ENCODE measurements at regions of chr9 and their contacts with region 1.

Region 1: DNA sequence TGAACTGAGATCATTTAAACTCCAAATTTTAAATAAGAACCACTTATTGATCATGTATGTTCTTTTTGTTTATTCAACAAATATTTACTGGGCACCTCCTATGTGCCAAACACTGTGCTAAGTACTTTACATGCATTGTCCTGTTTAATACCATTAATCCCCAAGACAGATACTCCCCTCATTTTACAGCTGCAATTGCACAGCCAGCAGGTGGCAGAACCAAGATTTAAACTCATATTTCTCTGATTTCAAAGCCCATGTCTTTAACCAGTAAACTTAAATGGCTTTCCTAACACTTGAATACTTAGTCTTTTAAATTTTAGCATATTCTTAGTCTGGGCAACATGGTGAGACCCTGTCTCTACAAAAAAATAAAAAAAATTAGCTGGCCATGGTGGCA is 43.4 kb upstream of the KIAA1958 start:
- DNase-seq: peak in 4 of 5 donors; percentile 14 to 28 (median 24)
- H3K4me3 ChIP-seq: no peak overlapping the region
- H3K4me3 Mint-ChIP-seq: no peak overlapping the region
- H3K27ac ChIP-seq: no peak overlapping the region
- H3K27ac Mint-ChIP-seq: no peak overlapping the region
- H3K4me1 ChIP-seq: no peaks in the 10 kb centered on the region
- H3K4me1 Mint-ChIP-seq: peaks cover 0 to 2% (median 0%) of the 10 kb centered on the region in 4 donors
- H3K27me3 ChIP-seq: no peaks in the 10 kb centered on the region
- H3K27me3 Mint-ChIP-seq: no peaks in the 10 kb centered on the region

Region 2: DNA sequence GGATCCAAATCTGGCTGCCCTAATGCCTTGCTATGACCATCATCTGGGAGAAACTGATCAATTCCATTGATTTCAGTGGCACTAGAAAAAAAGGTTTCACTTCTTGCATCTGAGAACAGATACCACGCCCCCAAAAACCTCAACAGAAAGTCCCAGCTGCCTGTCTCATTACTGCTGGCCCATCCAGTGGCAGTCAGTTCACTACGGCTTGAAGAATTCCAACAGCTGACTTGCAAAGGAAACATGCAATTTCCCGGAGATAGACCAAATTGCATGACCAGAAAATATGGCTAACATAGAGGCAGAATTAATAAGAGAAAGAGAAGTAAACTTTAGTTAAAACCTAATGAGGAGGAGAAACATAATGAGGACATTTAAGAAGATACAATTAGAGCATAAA is 498.0 kb before region 1 on chr9:
- CTCF ChIA-PET with region 1: no interaction called
- POLR2A ChIA-PET with region 1: no interaction called
- intact Hi-C with region 1: no loop called
- DNase-seq: peak in 1 of 5 donors; percentile 37
- H3K4me3 ChIP-seq: no peak overlapping the region
- H3K4me3 Mint-ChIP-seq: peak overlapping the region in 3 of 8 donors; percentile 5 to 60 (median 26)
- H3K27ac ChIP-seq: no peak overlapping the region
- H3K27ac Mint-ChIP-seq: no peak overlapping the region
- H3K4me1 ChIP-seq: peaks cover 7% of the 10 kb centered on the region
- H3K4me1 Mint-ChIP-seq: peaks cover 5 to 21% (median 8%) of the 10 kb centered on the region in 4 donors
- H3K27me3 ChIP-seq: no peaks in the 10 kb centered on the region
- H3K27me3 Mint-ChIP-seq: no peaks in the 10 kb centered on the region

Region 3: DNA sequence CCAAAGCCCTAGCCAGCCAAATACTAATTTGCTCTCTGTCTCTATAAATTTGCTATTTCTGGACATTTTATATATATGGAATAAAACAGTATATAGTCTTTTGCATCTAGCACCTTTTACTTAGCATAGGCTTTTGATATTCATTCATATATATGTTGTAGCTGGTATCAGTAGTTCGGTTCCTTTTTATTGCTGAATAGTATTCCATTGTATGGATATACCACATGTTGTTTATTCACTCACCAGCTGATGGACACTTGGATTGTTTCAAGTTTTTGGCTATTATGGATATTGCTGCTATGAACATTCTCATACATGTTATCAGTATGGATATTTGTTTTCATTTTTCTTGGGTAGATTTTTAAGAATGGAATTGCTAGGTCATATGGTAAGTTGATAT is 19.7 kb after region 1 on chr9:
- CTCF ChIA-PET with region 1: interaction called, 11 read pairs
- POLR2A ChIA-PET with region 1: no interaction called
- intact Hi-C with region 1: no loop called
- DNase-seq: no peak
- H3K4me3 ChIP-seq: no peak overlapping the region
- H3K4me3 Mint-ChIP-seq: no peak overlapping the region
- H3K27ac ChIP-seq: no peak overlapping the region
- H3K27ac Mint-ChIP-seq: no peak overlapping the region
- H3K4me1 ChIP-seq: no peaks in the 10 kb centered on the region
- H3K4me1 Mint-ChIP-seq: no peaks in the 10 kb centered on the region
- H3K27me3 ChIP-seq: no peaks in the 10 kb centered on the region
- H3K27me3 Mint-ChIP-seq: no peaks in the 10 kb centered on the region

Region 4: GRCh38 chr9:112486221-112487007 is 43.2 kb after region 1 on chr9 and contains the start of gene KIAA1958:
- CTCF ChIA-PET with region 1: interaction called, 6 read pairs
- POLR2A ChIA-PET with region 1: interaction called, 3 read pairs
- intact Hi-C with region 1: loop called (anchors 2 kb)
- DNase-seq: peak; percentile 65 to 76 (median 72)
- H3K4me3 ChIP-seq: peak within 1 kb of the TSS; percentile 77 to 78
- H3K4me3 Mint-ChIP-seq: peak within 1 kb of the TSS; percentile 93 to 99 (median 96)
- H3K27ac ChIP-seq: peak within 1 kb of the TSS; percentile 42
- H3K27ac Mint-ChIP-seq: peak within 1 kb of the TSS; percentile 79 to 95 (median 92)
- H3K4me1 ChIP-seq: peaks cover 8% of the 10 kb centered on the region
- H3K4me1 Mint-ChIP-seq: peaks cover 9 to 28% (median 16%) of the 10 kb centered on the region in 4 donors
- H3K27me3 ChIP-seq: no peaks in the 10 kb centered on the region
- H3K27me3 Mint-ChIP-seq: no peaks in the 10 kb centered on the region
- total RNA-seq, gene KIAA1958: 4.3 to 5.1 TPM

Region 5: DNA sequence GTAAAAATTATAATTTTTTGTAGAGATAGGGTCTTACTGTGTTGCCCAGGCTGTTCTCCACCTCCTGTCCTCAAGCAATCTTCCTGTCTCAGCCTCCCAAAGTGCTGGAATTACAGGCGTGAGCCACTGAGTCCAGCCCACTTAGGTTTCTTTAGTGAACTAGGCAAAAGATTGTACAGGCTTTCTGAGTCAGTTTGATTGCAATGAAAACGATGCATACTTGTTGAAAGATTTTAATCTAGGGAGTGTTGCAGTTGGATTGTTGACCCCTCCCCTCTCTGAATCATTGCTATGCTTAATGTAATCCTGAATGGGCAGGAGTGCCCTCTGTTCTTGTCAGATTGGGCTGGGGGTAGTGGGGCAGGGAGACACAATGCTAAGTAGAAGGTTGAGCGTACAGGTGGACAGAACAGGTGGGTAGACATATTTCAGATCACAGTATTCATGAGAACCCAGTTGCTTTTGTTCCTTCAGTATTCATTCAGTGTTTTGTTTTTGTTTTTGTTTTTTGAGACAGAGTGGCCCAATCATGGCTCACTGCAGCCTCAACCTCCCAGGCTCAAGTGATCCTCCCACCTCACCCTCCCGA is 113.4 kb after region 1 on chr9:
- CTCF ChIA-PET with region 1: no interaction called
- POLR2A ChIA-PET with region 1: no interaction called
- intact Hi-C with region 1: no loop called
- DNase-seq: no peak
- H3K4me3 ChIP-seq: no peak overlapping the region
- H3K4me3 Mint-ChIP-seq: no peak overlapping the region
- H3K27ac ChIP-seq: no peak overlapping the region
- H3K27ac Mint-ChIP-seq: peak overlapping the region in 1 of 7 donors; percentile 53
- H3K4me1 ChIP-seq: no peaks in the 10 kb centered on the region
- H3K4me1 Mint-ChIP-seq: no peaks in the 10 kb centered on the region
- H3K27me3 ChIP-seq: no peaks in the 10 kb centered on the region
- H3K27me3 Mint-ChIP-seq: no peaks in the 10 kb centered on the region

Region 6: DNA sequence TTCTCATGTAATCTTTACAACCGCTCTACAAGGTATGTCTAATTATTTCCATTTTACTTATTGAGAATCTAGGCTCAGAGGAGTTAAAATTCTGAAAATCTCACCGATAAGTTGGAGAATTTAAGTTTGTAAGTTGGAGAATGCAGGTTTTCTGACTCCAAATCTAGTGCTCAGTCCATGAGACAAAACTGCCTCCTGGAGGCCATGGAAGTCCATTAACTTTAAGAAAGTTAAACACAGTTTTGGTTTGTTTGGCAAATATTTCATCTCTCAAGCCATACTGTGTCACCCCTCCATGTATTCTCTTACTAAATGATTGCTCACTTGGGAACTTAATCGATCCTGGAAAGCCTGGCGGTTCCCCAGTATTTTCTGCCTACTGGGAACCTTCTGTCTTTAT is 222.1 kb after region 1 on chr9:
- CTCF ChIA-PET with region 1: interaction called, 6 read pairs
- POLR2A ChIA-PET with region 1: no interaction called
- intact Hi-C with region 1: loop called (anchors 1 kb)
- DNase-seq: no peak
- H3K4me3 ChIP-seq: no peak overlapping the region
- H3K4me3 Mint-ChIP-seq: no peak overlapping the region
- H3K27ac ChIP-seq: no peak overlapping the region
- H3K27ac Mint-ChIP-seq: no peak overlapping the region
- H3K4me1 ChIP-seq: no peaks in the 10 kb centered on the region
- H3K4me1 Mint-ChIP-seq: no peaks in the 10 kb centered on the region
- H3K27me3 ChIP-seq: no peaks in the 10 kb centered on the region
- H3K27me3 Mint-ChIP-seq: no peaks in the 10 kb centered on the region

Measured in CD4-positive, alpha-beta memory T cell (primary cell).